AG04450 (cell line): ENCODE measurements at regions of chr1 and their contacts with region 1.

Region 1: DNA sequence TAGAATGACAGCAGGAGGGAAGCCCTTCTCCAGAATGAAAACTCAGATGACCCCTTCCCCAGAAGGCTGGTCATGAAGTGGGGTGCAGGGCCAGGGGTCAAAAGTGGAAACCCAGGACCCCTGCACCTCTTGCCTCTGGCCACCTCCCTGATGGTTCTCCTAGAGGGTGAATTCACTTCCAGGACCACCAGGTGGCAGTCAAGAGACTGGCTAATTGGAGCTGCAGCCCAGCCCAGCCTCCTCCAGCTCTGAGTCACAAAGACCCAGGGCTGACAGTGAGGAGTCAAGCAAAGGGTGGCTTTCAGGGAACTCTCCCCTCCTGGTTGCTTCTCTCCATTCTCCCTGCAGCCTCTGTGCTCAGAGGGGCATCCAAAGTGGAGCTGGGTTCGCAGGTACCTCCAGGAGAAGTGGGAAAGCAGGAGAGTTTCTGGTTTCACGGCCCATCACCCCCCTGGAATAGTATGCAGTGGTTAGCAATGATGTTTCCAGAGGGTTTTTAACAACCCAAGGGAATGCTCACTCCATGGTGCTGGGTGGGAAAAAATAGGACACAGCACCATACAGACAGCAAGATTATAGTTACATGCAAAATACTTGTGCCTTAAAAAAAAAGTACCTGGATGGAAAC is 6.1 kb upstream of the EPHB2 start:
- DNase-seq: peak; percentile 59
- H3K4me3 ChIP-seq: no peak overlapping the region
- H3K27ac ChIP-seq: no peak overlapping the region
- H3K27me3 ChIP-seq: no peaks in the 10 kb centered on the region
- CTCF ChIP-seq: peak; percentile 96

Region 2: GRCh38 chr1:22536506-22536905 is 168.0 kb before region 1 on chr1:
- CTCF ChIA-PET with region 1: no interaction called
- POLR2A ChIA-PET with region 1: no interaction called
- DNase-seq: no peak
- H3K4me3 ChIP-seq: no peak overlapping the region
- H3K27ac ChIP-seq: no peak overlapping the region
- H3K27me3 ChIP-seq: no peaks in the 10 kb centered on the region
- CTCF ChIP-seq: no peak

Region 3: GRCh38 chr1:22691031-22691753 is 13.4 kb before region 1 on chr1:
- CTCF ChIA-PET with region 1: interaction called, 24 read pairs
- POLR2A ChIA-PET with region 1: no interaction called
- DNase-seq: no peak
- H3K4me3 ChIP-seq: no peak overlapping the region
- H3K27ac ChIP-seq: no peak overlapping the region
- H3K27me3 ChIP-seq: no peaks in the 10 kb centered on the region
- CTCF ChIP-seq: no peak

Region 4: GRCh38 chr1:22861764-22862440 is 157.3 kb after region 1 on chr1:
- CTCF ChIA-PET with region 1: interaction called, 74 read pairs
- POLR2A ChIA-PET with region 1: no interaction called
- DNase-seq: peak; percentile 45
- H3K4me3 ChIP-seq: no peak overlapping the region
- H3K27ac ChIP-seq: peak overlapping the region; percentile 74
- H3K27me3 ChIP-seq: no peaks in the 10 kb centered on the region
- CTCF ChIP-seq: peak; percentile 97

Region 5: DNA sequence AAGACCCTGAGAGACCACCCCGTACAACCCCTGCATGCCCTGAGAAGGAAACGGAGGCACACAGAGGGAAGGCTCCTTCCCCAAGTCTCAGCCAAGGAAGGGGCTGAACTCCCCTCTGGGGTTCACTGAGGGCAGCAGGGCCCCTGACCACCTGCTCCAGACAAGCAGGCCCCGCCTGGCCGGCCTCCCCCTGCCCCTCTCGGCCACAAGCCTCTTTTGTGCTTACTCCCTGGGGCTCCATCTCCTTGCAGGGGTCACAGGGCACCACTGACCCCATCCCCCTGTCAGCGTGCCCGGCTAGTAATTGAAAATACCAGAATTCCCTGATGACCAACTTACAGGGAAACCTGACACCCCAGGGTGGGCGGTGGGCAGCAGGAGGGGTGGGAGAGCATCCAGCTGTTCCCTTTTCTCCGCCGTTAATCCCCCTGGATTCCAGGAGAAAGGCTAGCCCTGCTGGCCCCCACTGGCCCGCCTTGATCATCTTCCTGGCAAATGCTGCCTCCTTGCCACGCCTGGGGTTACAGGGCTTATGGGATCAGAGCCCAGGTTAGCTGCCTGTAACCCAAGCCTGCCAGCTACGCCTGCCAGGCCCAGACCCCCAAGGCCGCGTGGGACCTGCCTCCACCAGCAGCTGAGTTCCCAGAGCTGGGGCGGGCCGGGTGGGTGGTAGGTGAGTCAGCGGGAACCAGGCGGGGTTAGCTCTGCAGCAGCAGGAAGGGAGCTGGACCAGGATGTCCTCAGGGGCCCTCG is 172.0 kb after region 1 on chr1:
- CTCF ChIA-PET with region 1: interaction called, 14 read pairs
- POLR2A ChIA-PET with region 1: no interaction called
- DNase-seq: no peak
- H3K4me3 ChIP-seq: no peak overlapping the region
- H3K27ac ChIP-seq: no peak overlapping the region
- H3K27me3 ChIP-seq: no peaks in the 10 kb centered on the region
- CTCF ChIP-seq: no peak

Region 6: GRCh38 chr1:22889213-22889827 is 184.8 kb after region 1 on chr1:
- CTCF ChIA-PET with region 1: interaction called, 49 read pairs
- POLR2A ChIA-PET with region 1: no interaction called
- DNase-seq: no peak
- H3K4me3 ChIP-seq: no peak overlapping the region
- H3K27ac ChIP-seq: peak overlapping the region; percentile 11
- H3K27me3 ChIP-seq: no peaks in the 10 kb centered on the region
- CTCF ChIP-seq: peak; percentile 80

Region 7: DNA sequence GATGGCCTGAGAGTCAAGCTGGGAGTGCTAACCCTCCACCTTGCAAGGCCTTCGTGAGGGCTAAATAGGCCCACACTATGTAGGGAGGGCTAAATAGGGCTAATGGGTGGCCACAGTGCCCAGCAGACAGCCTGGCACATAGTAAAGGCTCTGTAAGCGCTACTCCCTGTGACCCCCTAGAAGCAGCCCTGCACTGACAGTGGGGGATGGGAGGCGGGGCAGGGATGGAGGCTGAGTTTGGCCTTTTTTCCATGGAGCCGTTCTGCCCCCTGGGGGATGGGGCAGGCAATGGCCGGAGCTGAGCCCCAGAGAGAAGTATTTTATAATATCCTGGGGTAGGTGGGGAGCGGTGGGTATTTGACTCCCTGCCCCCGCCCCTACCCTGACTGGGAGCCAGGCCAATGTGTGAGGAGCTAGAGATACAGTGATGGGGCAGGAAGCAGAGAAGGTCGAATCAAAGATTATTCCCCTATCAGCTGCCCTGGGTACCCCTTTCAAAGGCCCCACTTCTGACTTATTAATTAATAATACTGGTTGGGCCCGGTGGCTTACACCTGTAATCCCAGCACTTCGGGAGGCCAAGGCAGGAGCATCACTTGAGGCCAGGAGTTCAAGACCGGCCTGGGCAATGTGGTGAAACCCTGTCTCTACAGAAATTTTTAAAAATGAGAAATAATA is 225.8 kb after region 1 on chr1:
- CTCF ChIA-PET with region 1: interaction called, 66 read pairs
- POLR2A ChIA-PET with region 1: no interaction called
- DNase-seq: no peak
- H3K4me3 ChIP-seq: no peak overlapping the region
- H3K27ac ChIP-seq: no peak overlapping the region
- H3K27me3 ChIP-seq: peaks cover 12% of the 10 kb centered on the region
- CTCF ChIP-seq: peak; percentile 85

Region 8: DNA sequence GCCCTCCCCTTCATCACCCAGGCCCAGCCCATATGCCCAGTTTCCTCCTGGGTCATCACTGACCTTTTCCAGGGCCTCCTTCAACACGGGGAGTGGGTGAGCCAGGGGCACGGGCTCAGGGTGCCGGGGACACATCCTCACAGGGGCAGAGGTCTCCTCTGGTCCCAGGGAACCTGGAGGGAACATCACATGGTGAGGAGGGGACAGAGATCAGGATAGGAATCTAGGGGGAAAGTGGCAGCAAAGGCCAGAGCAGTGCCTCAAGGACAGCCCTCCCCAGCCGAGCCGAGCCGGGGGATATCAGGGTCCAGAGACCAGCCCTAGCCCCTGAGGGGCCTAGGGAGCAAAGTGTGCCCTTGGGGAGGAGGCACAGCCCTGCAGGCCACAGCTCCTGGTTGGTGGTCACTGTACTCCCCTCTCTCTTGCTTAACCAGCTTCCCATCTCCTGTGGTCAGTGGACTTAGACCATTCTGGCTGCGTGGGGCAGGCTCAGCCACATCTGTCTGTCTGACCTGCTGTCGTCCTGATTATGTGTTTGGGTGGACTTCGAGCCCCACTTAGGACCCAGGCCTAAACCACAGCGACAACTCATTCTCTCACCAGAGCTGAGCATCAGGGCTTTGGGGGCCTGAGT is 258.6 kb after region 1 on chr1:
- CTCF ChIA-PET with region 1: interaction called, 18 read pairs
- POLR2A ChIA-PET with region 1: no interaction called
- DNase-seq: no peak
- H3K4me3 ChIP-seq: no peak overlapping the region
- H3K27ac ChIP-seq: no peak overlapping the region
- H3K27me3 ChIP-seq: peaks cover 35% of the 10 kb centered on the region
- CTCF ChIP-seq: no peak